ENCODE measurements at regions of chr9 and their contacts with region 1.

Region 1: GRCh38 chr9:19759066-19759465 is 29.8 kb downstream of the SLC24A2 start:
- DNase-seq: no peak
- ATAC-seq: no peak
- H3K4me3 ChIP-seq: no peak overlapping the region
- H3K27ac ChIP-seq: no peak overlapping the region
- H3K4me1 ChIP-seq: no peaks in the 10 kb centered on the region
- H3K27me3 ChIP-seq: peaks cover 3% of the 10 kb centered on the region; the same call in 1 of the 2 replicates
- CTCF ChIP-seq: no peak
- POLR2A ChIP-seq: no peak
- RAD21 ChIP-seq: no peak

Region 2: GRCh38 chr9:19746223-19746622 is 12.8 kb before region 1 on chr9:
- CTCF ChIA-PET with region 1: no interaction called
- POLR2A ChIA-PET with region 1: no interaction called
- RAD21 ChIA-PET with region 1: no interaction called
- intact Hi-C with region 1: loop called (anchors 1 kb)
- DNase-seq: no peak
- ATAC-seq: no peak
- H3K4me3 ChIP-seq: no peak overlapping the region
- H3K27ac ChIP-seq: no peak overlapping the region
- H3K4me1 ChIP-seq: peaks cover 0 to 6% of the 10 kb centered on the region in 2 experiments; a peak in 1 of 4 replicates
- H3K27me3 ChIP-seq: peaks cover 15% of the 10 kb centered on the region; the same call in 1 of the 2 replicates
- CTCF ChIP-seq: no peak
- POLR2A ChIP-seq: no peak
- RAD21 ChIP-seq: no peak